HCT116 (cell line): ENCODE measurements at regions of chr7 and their contacts with region 1.

Region 1: GRCh38 chr7:155205368-155206317 is 92.0 kb upstream of the INSIG1 start:
- DNase-seq: peak; percentile 91
- ATAC-seq: peak; percentile 89
- H3K4me3 ChIP-seq: peak overlapping the region; percentile 32 to 37
- H3K27ac ChIP-seq: peak overlapping the region; percentile 59
- H3K4me1 ChIP-seq: peaks cover 28 to 47% of the 10 kb centered on the region in 2 experiments
- H3K27me3 ChIP-seq: no peaks in the 10 kb centered on the region
- CTCF ChIP-seq: no peak
- POLR2A ChIP-seq: peak; percentile 3
- RAD21 ChIP-seq: no peak

Region 2: DNA sequence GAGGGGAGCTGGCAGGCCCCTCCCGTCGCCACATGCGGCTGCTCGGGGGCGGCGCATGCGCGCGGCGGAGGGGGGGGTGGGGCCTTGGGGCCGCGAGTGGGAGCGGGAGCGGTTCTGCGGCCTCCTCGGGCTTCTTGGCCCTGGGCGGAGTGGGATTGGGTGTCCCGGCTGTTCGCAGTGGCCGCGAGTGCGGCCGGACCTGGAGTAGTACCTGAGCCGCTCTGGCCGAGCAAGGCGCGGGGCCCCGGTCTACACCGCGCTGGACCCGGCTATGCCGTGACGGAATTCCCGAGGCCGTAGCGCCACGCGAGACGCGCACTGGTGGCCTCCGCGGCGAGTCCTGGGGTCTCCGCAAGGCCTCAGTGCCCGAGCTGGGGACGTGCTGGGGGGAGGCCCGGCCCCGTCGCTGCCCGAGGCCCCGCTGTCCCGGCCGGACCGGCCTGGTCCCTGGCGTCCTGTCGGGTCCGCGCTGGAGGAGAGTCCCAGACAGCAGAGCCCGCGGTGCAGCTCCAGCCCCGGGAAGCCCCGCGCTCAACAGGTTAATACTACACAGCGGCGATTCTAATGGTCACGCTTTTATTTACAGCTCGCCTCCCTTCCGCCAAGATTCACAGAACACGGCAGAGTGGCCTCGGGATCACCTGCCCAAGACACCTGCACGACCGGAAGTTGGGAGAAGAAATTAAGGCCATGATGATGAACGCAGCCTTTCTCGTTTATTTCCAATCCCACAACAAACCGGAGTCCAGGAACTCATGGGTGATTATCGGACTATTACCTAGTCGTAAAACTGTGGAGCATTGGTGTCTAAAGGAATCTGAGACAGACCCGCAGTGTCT is 202.0 kb before region 1 on chr7:
- CTCF ChIA-PET with region 1: no interaction called
- POLR2A ChIA-PET with region 1: no interaction called
- RAD21 ChIA-PET with region 1: no interaction called
- intact Hi-C with region 1: loop called (anchors 5 kb)
- DNase-seq: peak; percentile 35
- ATAC-seq: peak; percentile 77
- H3K4me3 ChIP-seq: peak overlapping the region; percentile 66 to 93
- H3K27ac ChIP-seq: peak overlapping the region; percentile 88
- H3K4me1 ChIP-seq: peaks cover 5 to 19% of the 10 kb centered on the region in 2 experiments; a peak in 3 of 4 replicates
- H3K27me3 ChIP-seq: no peaks in the 10 kb centered on the region
- CTCF ChIP-seq: no peak
- POLR2A ChIP-seq: peak; percentile 59
- RAD21 ChIP-seq: no peak

Region 3: DNA sequence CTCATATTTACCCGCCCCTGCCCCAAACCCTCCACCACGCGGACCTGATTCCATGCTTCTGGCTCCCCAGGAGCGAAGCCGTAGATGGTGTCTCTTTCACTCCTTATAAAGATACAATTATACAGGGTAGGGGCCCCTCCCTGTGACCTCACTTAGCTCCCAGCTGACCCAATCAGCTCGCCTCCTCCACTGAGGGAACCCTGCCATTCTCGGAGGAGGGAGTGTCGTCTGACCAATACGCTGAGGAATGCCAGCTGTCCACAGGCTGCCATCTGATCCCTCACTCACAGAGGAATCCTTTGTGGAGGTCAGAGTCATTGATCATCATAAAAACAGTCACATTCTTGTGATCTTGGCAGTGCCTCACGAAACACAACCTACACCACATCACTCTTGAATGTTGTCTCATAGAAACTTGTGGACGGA is 24.5 kb after region 1 on chr7:
- CTCF ChIA-PET with region 1: no interaction called
- POLR2A ChIA-PET with region 1: no interaction called
- RAD21 ChIA-PET with region 1: no interaction called
- intact Hi-C with region 1: loop called (anchors 1 kb)
- DNase-seq: peak; percentile 96
- ATAC-seq: peak; percentile 98
- H3K4me3 ChIP-seq: 0 out of 4 replicates have a peak overlapping the region, but pooled peaks of 1 of the 2 experiments have one; percentile 18
- H3K27ac ChIP-seq: no peak overlapping the region
- H3K4me1 ChIP-seq: peaks cover 5 to 31% of the 10 kb centered on the region in 2 experiments; a peak in 3 of 4 replicates
- H3K27me3 ChIP-seq: no peaks in the 10 kb centered on the region
- CTCF ChIP-seq: no peak
- POLR2A ChIP-seq: no peak
- RAD21 ChIP-seq: peak; percentile 21; the same call in 1 of the 2 replicates